ENCODE measurements at regions of chr5 and their contacts with region 1.

Region 1: GRCh38 chr5:141636413-141637122 is at the starts of genes HDAC3 and RELL2:
- DNase-seq: peak; percentile 99
- H3K4me3 Mint-ChIP-seq: peak within 1 kb of the TSS; percentile 96
- H3K27ac Mint-ChIP-seq: peak within 1 kb of the TSS; percentile 92
- H3K4me1 Mint-ChIP-seq: peaks cover 43% of the 10 kb centered on the region
- H3K27me3 Mint-ChIP-seq: no peaks in the 10 kb centered on the region
- total RNA-seq, gene HDAC3: 88.1 and 92.3 TPM in 2 replicates
- total RNA-seq, gene RELL2: 24.1 TPM in 2 replicates

Region 2: GRCh38 chr5:141543053-141543452 is 93.5 kb before region 1 on chr5:
- intact Hi-C with region 1: no loop called
- DNase-seq: no peak
- H3K4me3 Mint-ChIP-seq: no peak overlapping the region
- H3K27ac Mint-ChIP-seq: no peak overlapping the region
- H3K4me1 Mint-ChIP-seq: peaks cover 1% of the 10 kb centered on the region
- H3K27me3 Mint-ChIP-seq: no peaks in the 10 kb centered on the region

Region 3: DNA sequence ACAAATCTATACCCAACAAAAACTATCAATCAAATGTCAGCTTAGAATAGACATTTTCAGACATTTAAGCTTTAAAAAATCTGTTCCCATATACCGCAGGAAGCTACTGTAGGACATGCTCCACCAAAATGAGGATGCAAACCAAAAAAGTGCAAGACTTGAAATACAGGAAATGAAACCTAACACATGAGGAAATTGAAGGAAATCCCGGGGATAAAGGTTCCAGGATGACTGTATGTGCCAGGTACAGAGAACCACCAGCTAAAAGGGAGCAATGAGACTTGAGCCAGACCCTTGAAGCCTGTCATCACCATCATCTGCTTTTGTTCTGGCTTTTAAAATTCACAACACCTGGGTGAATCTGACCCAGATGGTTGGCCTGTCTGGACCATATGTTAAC is 39.2 kb before region 1 on chr5:
- intact Hi-C with region 1: loop called (anchors 1 kb)
- DNase-seq: no peak
- H3K4me3 Mint-ChIP-seq: peak overlapping the region; percentile 32
- H3K27ac Mint-ChIP-seq: peak overlapping the region; percentile 47
- H3K4me1 Mint-ChIP-seq: peaks cover 56% of the 10 kb centered on the region
- H3K27me3 Mint-ChIP-seq: no peaks in the 10 kb centered on the region

Region 4: GRCh38 chr5:141650851-141651727 is 14.5 kb after region 1 on chr5 and contains the start of gene FCHSD1:
- intact Hi-C with region 1: loop called (anchors 1 kb)
- DNase-seq: peak; percentile 94
- H3K4me3 Mint-ChIP-seq: peak within 1 kb of the TSS; percentile 92
- H3K27ac Mint-ChIP-seq: peak within 1 kb of the TSS; percentile 93
- H3K4me1 Mint-ChIP-seq: peaks cover 28% of the 10 kb centered on the region
- H3K27me3 Mint-ChIP-seq: no peaks in the 10 kb centered on the region
- total RNA-seq, gene FCHSD1: 33.1 and 34.5 TPM in 2 replicates

Measured in activated CD4-positive, alpha-beta T cell treated with anti-CD3 and anti-CD28 coated beads, Interleukin-2, amount 10 ng/mL, durations not matched to agents 24 days and 14 days (primary cell).